ENCODE measurements at regions of chr12 and their contacts with region 1.

Region 1: GRCh38 chr12:43325786-43326185 is 226.2 kb downstream of the ADAMTS20 start:
- DNase-seq: no peak
- H3K4me3 ChIP-seq: no peak overlapping the region
- H3K27ac ChIP-seq: no peak overlapping the region
- H3K4me1 ChIP-seq: no peaks in the 10 kb centered on the region
- H3K27me3 ChIP-seq: no peaks in the 10 kb centered on the region
- CTCF ChIP-seq: no peak
- EP300 ChIP-seq: no peak
- POLR2A ChIP-seq: no peak

Region 2: DNA sequence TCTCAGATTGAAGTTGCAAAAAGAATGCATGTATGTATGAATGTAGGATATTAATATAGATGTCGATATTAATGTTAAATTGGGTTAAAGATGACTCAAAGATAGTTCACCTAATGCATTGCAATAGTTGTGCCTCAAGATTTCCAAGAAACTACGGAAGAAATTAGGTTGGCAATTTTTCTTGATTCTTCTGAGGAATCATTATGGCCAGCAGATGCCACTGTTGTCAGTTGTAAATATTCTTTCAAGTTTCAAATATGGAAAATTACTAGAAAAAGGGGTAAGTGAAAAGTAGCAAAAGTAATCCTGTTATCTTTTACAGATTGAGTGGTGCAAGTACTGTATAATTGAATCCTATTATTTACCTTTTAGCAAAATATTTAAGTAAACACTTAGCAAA is 24.1 kb after region 1 on chr12:
- in situ Hi-C with region 1: no loop called
- intact Hi-C with region 1: loop called (anchors 2 kb)
- DNase-seq: no peak
- H3K4me3 ChIP-seq: no peak overlapping the region
- H3K27ac ChIP-seq: no peak overlapping the region
- H3K4me1 ChIP-seq: no peaks in the 10 kb centered on the region
- H3K27me3 ChIP-seq: no peaks in the 10 kb centered on the region
- CTCF ChIP-seq: no peak
- EP300 ChIP-seq: no peak
- POLR2A ChIP-seq: no peak